CD4-positive, alpha-beta memory T cell (primary cell): ENCODE measurements at regions of chr2 and their contacts with region 1.

Region 1: GRCh38 chr2:73985308-73986084 is 786 bp downstream of the TET3 start:
- DNase-seq: peak in 4 of 5 donors; percentile 47 to 76 (median 52)
- H3K4me3 ChIP-seq: peak overlapping the region; percentile 52 to 73
- H3K4me3 Mint-ChIP-seq: peak overlapping the region; percentile 81 to 92 (median 84)
- H3K27ac ChIP-seq: peak overlapping the region; percentile 75
- H3K27ac Mint-ChIP-seq: peak overlapping the region; percentile 34 to 96 (median 87)
- H3K4me1 ChIP-seq: peaks cover 76% of the 10 kb centered on the region
- H3K4me1 Mint-ChIP-seq: peaks cover 59 to 85% (median 70%) of the 10 kb centered on the region in 4 donors
- H3K27me3 ChIP-seq: no peaks in the 10 kb centered on the region
- H3K27me3 Mint-ChIP-seq: no peaks in the 10 kb centered on the region

Region 2: DNA sequence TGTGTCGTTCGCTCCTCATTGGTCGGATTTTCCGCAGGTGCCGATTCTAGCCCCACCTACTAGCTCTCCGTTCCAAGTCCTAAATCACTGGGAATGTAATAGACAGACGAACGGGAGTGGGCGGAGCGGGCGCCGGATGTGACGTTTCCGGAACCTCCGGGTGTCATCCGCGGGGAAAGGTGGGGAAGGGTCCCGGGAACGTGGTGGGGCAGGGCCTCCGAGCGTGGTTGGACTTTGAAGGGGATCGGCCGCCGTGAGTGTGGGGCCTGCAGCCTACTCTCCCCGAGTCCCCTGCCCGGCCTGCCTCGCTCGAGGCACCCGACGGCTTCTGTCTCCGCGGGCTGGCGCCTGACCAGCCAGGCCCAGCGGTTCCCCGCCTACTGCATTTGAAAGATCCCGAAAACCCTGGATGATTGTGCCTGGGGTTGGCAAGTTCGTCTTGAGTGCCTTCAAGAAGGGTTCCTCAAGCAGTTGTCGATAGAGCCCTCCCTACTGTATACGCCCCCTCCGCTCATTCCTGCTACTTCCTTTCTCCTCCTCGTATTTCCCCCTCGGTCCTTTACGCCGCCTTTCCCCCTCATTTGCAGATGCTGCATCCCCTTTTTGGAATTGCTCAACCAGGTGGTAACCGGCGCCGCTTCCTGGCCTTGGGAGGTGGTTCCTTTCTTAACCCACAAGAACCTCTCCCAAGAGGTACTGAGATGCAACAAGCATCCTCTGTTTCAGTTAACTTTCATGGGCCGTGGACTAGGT is 156.5 kb before region 1 on chr2 and contains the start of gene STAMBP:
- CTCF ChIA-PET with region 1: interaction called, 24 read pairs
- POLR2A ChIA-PET with region 1: interaction called, 11 read pairs
- intact Hi-C with region 1: loop called (anchors 1 kb)
- DNase-seq: peak; percentile 87 to 95 (median 91)
- H3K4me3 ChIP-seq: peak within 1 kb of the TSS; percentile 64 to 81
- H3K4me3 Mint-ChIP-seq: peak within 1 kb of the TSS; percentile 91 to 99 (median 96)
- H3K27ac ChIP-seq: peak within 1 kb of the TSS; percentile 92
- H3K27ac Mint-ChIP-seq: peak within 1 kb of the TSS; percentile 94 to 100 (median 98)
- H3K4me1 ChIP-seq: peaks cover 45% of the 10 kb centered on the region
- H3K4me1 Mint-ChIP-seq: peaks cover 34 to 49% (median 40%) of the 10 kb centered on the region in 4 donors
- H3K27me3 ChIP-seq: no peaks in the 10 kb centered on the region
- H3K27me3 Mint-ChIP-seq: no peaks in the 10 kb centered on the region
- total RNA-seq, gene STAMBP: 34.8 to 37.3 TPM

Region 3: GRCh38 chr2:73939419-73939818 is 46.1 kb before region 1 on chr2:
- CTCF ChIA-PET with region 1: interaction called, 6 read pairs
- POLR2A ChIA-PET with region 1: interaction called, 5 read pairs
- intact Hi-C with region 1: loop called (anchors 1 kb)
- DNase-seq: peak in 2 of 5 donors; percentile 18 to 21
- H3K4me3 ChIP-seq: no peak overlapping the region
- H3K4me3 Mint-ChIP-seq: no peak overlapping the region
- H3K27ac ChIP-seq: no peak overlapping the region
- H3K27ac Mint-ChIP-seq: peak overlapping the region in 6 of 7 donors; percentile 15 to 78 (median 28)
- H3K4me1 ChIP-seq: peaks cover 51% of the 10 kb centered on the region
- H3K4me1 Mint-ChIP-seq: peaks cover 53 to 80% (median 69%) of the 10 kb centered on the region in 4 donors
- H3K27me3 ChIP-seq: no peaks in the 10 kb centered on the region
- H3K27me3 Mint-ChIP-seq: no peaks in the 10 kb centered on the region

Region 4: DNA sequence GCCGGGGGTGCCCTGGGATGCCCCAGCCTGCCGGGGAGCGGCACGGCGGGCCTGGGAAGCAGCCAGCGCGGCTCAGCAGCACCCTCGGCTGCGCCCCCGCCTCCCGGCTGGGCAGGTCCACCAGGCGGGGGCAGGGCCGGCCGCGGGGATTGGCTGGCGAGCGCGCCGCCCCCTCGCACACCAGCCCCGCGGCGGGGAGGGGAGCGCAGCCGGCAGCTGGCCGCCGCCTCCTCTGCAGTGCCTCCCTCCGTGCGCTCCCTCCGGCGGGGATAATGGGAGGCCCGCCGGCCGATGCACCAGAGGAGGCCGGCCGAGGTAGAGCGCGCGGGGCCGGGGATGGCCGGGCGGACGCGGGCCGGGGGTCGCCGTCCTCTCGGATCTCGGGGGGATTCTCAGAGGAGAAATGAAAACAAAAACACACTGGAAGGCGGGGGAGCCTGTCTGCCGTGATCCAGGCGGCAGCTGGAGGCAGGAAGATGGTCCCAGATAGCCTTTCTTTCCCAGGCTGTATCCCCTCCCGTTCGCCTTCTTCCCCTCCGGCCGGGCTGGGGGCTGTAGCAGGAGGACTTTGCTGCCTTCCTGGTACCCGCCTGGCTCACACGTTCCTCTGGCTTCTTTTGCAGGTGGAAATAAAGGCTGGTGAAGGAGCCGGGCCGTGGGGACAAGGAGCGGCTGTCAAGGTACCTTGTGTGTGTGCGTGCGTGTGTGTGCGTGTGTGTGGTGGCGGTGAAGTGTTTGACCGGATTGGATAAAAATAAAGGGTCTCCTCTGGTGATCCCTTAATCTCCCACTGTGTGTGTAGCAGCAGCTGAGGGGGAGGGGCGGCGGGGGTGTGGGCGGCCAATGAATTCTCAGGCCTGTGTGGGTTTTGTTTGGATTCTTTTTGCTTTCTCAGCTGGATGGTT is 17.2 kb after region 1 on chr2:
- CTCF ChIA-PET with region 1: interaction called, 24 read pairs
- POLR2A ChIA-PET with region 1: interaction called, 34 read pairs
- intact Hi-C with region 1: loop called (anchors 1 kb)
- DNase-seq: peak; percentile 80 to 85 (median 83)
- H3K4me3 ChIP-seq: peak overlapping the region; percentile 9 to 49
- H3K4me3 Mint-ChIP-seq: peak overlapping the region; percentile 77 to 88 (median 84)
- H3K27ac ChIP-seq: peak overlapping the region; percentile 57
- H3K27ac Mint-ChIP-seq: peak overlapping the region; percentile 2 to 89 (median 85)
- H3K4me1 ChIP-seq: peaks cover 44% of the 10 kb centered on the region
- H3K4me1 Mint-ChIP-seq: peaks cover 32 to 77% (median 47%) of the 10 kb centered on the region in 4 donors
- H3K27me3 ChIP-seq: no peaks in the 10 kb centered on the region
- H3K27me3 Mint-ChIP-seq: no peaks in the 10 kb centered on the region

Region 5: GRCh38 chr2:74020702-74021406 is 35.4 kb after region 1 on chr2:
- CTCF ChIA-PET with region 1: no interaction called
- POLR2A ChIA-PET with region 1: no interaction called
- intact Hi-C with region 1: no loop called
- DNase-seq: no peak
- H3K4me3 ChIP-seq: no peak overlapping the region
- H3K4me3 Mint-ChIP-seq: peak overlapping the region in 2 of 8 donors; percentile 6 to 20
- H3K27ac ChIP-seq: no peak overlapping the region
- H3K27ac Mint-ChIP-seq: peak overlapping the region in 3 of 7 donors; percentile 4 to 32 (median 30)
- H3K4me1 ChIP-seq: peaks cover 42% of the 10 kb centered on the region
- H3K4me1 Mint-ChIP-seq: peaks cover 16 to 50% (median 32%) of the 10 kb centered on the region in 4 donors
- H3K27me3 ChIP-seq: no peaks in the 10 kb centered on the region
- H3K27me3 Mint-ChIP-seq: no peaks in the 10 kb centered on the region

Region 6: DNA sequence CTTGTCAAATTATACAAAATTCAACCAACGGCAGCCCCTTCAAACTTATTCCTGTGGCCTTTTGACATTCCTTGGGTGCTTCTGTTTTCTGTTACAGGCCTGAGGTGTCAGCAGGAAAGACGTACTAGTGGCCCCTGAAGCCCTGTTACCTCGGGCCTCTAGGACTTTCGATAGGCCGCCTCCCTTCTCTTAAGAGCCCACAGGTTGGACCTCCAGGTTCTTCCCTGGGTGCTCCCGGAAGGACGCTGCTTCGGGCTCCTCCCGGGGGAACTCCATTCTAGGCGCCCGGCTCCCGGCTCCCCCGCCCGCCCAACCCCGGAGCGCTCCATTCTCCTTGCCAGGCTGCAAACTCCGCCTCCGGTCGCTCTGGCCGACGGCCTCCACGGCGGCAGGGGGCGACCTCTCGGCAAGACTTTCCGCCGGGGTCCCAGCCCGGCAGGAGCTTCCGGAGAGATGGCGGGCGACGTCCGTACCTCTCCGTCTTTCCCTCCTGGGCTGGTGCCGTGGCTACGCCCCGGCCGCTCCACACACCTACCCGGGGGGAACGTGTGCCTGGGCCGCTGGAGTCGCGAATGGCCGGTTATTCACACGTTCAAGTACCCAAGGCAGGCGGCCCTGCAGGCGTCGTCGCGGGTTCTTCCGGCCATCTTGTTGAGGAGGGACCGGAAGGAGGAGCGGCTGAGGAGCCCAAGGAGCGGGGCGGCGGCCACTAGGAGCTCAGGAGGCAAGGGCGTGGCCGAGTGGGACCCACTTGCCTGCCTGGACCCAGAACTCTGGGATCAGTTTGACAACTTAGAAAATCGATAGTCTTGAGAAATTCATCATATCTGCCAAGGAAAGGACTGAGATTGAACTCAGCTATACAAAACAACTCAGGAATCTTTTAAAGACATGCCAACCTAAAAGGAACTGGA is 134.7 kb after region 1 on chr2:
- CTCF ChIA-PET with region 1: interaction called, 4 read pairs
- POLR2A ChIA-PET with region 1: interaction called, 13 read pairs
- intact Hi-C with region 1: no loop called
- DNase-seq: peak; percentile 79 to 85 (median 80)
- H3K4me3 ChIP-seq: peak overlapping the region; percentile 33 to 94
- H3K4me3 Mint-ChIP-seq: peak overlapping the region; percentile 85 to 92 (median 88)
- H3K27ac ChIP-seq: peak overlapping the region; percentile 70
- H3K27ac Mint-ChIP-seq: peak overlapping the region; percentile 79 to 97 (median 92)
- H3K4me1 ChIP-seq: no peaks in the 10 kb centered on the region
- H3K4me1 Mint-ChIP-seq: peaks cover 4 to 11% (median 7%) of the 10 kb centered on the region in 4 donors
- H3K27me3 ChIP-seq: no peaks in the 10 kb centered on the region
- H3K27me3 Mint-ChIP-seq: peaks cover 0 to under 1% of the 10 kb centered on the region in 2 donors

Region 7: DNA sequence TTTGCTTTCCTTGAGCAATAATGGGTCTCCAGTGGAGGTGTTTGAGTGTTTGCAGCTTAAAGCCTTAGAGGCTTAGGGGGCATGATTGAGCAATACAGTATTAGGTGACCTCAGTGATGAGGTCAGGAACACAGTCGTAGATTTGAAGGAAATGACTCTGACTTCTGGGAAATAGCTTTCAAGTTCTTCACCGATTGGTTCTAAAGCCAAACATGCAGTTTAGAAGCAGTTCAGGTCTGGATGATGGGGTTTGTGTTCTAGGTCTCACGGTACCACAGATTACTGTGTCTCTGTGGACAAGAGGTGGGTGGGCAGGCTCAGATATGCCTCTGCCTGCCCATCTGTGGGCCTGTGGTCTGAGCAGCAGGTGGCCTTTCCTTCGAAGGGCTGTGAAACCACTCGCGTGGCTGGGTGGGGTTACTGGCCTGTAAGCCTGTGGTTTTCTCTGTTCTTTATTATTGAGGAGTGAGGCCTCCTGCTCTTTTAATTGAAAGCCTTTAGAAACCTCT is 220.7 kb after region 1 on chr2:
- CTCF ChIA-PET with region 1: no interaction called
- POLR2A ChIA-PET with region 1: no interaction called
- intact Hi-C with region 1: no loop called
- DNase-seq: peak; percentile 53 to 64 (median 55)
- H3K4me3 ChIP-seq: peak overlapping the region in 1 of 2 donors; percentile 23
- H3K4me3 Mint-ChIP-seq: peak overlapping the region; percentile 74 to 85 (median 80)
- H3K27ac ChIP-seq: peak overlapping the region; percentile 68
- H3K27ac Mint-ChIP-seq: peak overlapping the region; percentile 91 to 99 (median 96)
- H3K4me1 ChIP-seq: peaks cover 52% of the 10 kb centered on the region
- H3K4me1 Mint-ChIP-seq: peaks cover 27 to 56% (median 39%) of the 10 kb centered on the region in 4 donors
- H3K27me3 ChIP-seq: no peaks in the 10 kb centered on the region
- H3K27me3 Mint-ChIP-seq: no peaks in the 10 kb centered on the region